ENCODE measurements at regions of chr15 and their contacts with region 1.

Region 1: DNA sequence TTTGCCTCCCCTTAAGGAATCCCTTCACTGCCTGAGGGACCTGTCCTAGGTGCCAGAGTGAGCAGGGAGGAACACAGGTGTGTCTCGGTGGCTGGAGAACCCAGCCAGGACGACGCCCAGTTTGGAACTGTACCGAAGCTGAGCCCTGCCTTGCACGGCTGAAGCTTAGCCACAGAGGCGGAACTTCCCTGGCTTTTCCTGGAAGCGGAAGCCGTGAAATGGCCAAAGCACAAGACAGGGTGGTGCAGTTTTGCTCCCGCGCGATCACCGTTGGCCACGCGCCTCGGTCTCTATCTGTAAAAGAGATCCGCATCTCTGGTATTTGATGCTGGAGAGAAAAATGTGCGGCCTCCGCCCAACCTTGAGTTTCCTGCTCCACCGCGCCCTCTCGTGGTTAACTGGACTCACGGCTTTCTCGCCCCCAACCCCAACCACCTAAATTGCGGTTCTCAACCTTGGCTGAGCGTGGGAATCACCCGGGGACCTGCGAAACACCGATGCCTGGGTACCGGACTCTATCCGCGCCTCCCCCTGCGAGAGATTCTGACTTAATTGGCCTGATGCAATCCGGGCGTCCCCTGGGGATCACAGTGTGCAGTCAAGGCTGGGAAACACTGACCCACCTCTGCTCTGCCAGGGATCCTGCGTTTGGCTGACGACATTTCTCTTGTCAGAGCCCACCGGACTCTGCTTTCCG is 70.7 kb upstream of the ABHD2 start:
- H3K4me3 Mint-ChIP-seq: no peak overlapping the region
- H3K27ac Mint-ChIP-seq: no peak overlapping the region
- H3K4me1 Mint-ChIP-seq: peaks cover 54% of the 10 kb centered on the region
- H3K27me3 Mint-ChIP-seq: peaks cover 40% of the 10 kb centered on the region

Region 2: GRCh38 chr15:88904624-88905327 is 112.7 kb before region 1 on chr15:
- intact Hi-C with region 1: loop called (anchors 2 kb)
- H3K4me3 Mint-ChIP-seq: no peak overlapping the region
- H3K27ac Mint-ChIP-seq: no peak overlapping the region
- H3K4me1 Mint-ChIP-seq: no peaks in the 10 kb centered on the region
- H3K27me3 Mint-ChIP-seq: no peaks in the 10 kb centered on the region

Measured in dendritic cell treated with granulocyte-macrophage colony-stimulating factor and Interleukin-4, amounts not matched to agents 40 ng/mL and 50 ng/mL, for 4 days (primary cell).